ENCODE measurements at regions of chr6 and their contacts with region 1.

Region 1: GRCh38 chr6:43769526-43770416 is at the start of gene VEGFA:
- DNase-seq: peak; percentile 94 to 99 (median 98)
- ATAC-seq: peak; percentile 75
- H3K4me3 ChIP-seq: peak within 1 kb of the TSS; percentile 97
- H3K27ac ChIP-seq: peak within 1 kb of the TSS; percentile 91
- H3K4me1 ChIP-seq: peaks cover 18 to 58% of the 10 kb centered on the region in 2 experiments
- H3K27me3 ChIP-seq: no peaks in the 10 kb centered on the region
- CTCF ChIP-seq: peak; percentile 97 to 99 (median 97)
- EP300 ChIP-seq: no peak
- POLR2A ChIP-seq: peak; percentile 91
- RAD21 ChIP-seq: peak; percentile 97 to 99
- polyA plus RNA-seq, gene VEGFA: 14.0 to 16.0 TPM

Region 2: GRCh38 chr6:43744931-43745710 is 24.6 kb before region 1 on chr6:
- CTCF ChIA-PET with region 1: no interaction called
- POLR2A ChIA-PET with region 1: interaction called, 12 read pairs
- in situ Hi-C with region 1: no loop called
- intact Hi-C with region 1: no loop called
- DNase-seq: no peak
- ATAC-seq: no peak
- H3K4me3 ChIP-seq: no peak overlapping the region
- H3K27ac ChIP-seq: no peak overlapping the region
- H3K4me1 ChIP-seq: peaks cover 7 to 16% of the 10 kb centered on the region in 2 experiments; a peak in 4 of 5 replicates
- H3K27me3 ChIP-seq: no peaks in the 10 kb centered on the region; a peak in 1 of 5 replicates
- CTCF ChIP-seq: no peak
- EP300 ChIP-seq: no peak
- POLR2A ChIP-seq: no peak
- RAD21 ChIP-seq: no peak

Region 3: DNA sequence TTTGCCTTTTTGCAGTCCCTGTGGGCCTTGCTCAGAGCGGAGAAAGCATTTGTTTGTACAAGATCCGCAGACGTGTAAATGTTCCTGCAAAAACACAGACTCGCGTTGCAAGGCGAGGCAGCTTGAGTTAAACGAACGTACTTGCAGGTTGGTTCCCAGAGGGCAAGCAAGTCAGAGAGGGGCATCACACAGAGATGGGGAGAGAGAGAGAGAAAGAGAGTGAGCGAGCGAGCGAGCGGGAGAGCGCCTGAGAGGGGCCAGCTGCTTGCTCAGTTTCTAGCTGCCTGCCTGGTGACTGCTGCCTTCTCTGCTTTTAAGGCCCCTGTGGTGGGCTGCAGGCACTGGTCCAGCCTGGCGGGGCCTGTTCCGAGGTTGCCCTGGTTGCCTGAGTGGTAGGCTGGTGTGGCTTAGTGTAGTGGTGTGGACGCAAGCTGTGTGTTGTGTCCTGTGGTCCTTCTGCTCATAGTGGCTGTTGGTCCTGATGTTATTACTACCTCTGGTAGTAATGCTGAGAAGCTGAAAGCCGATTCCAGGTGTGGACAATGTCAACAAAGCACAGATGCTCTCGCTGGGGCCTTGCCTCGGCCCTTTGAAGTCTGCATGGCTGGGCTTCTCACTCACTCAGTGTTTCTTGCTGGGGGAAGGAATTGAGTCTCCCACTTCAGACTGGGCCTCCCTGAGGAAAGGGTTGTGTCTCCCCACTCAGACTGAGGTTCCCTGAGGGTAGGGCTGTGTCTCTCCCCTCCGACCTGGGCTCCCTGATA is 12.4 kb after region 1 on chr6:
- CTCF ChIA-PET with region 1: no interaction called
- POLR2A ChIA-PET with region 1: interaction called, 59 read pairs
- in situ Hi-C with region 1: no loop called
- intact Hi-C with region 1: no loop called
- DNase-seq: no peak
- ATAC-seq: no peak
- H3K4me3 ChIP-seq: no peak overlapping the region
- H3K27ac ChIP-seq: no peak overlapping the region
- H3K4me1 ChIP-seq: peaks cover 0 to 13% of the 10 kb centered on the region in 2 experiments; a peak in 1 of 5 replicates
- H3K27me3 ChIP-seq: no peaks in the 10 kb centered on the region
- CTCF ChIP-seq: no peak
- EP300 ChIP-seq: no peak
- POLR2A ChIP-seq: no peak
- RAD21 ChIP-seq: no peak

Region 4: DNA sequence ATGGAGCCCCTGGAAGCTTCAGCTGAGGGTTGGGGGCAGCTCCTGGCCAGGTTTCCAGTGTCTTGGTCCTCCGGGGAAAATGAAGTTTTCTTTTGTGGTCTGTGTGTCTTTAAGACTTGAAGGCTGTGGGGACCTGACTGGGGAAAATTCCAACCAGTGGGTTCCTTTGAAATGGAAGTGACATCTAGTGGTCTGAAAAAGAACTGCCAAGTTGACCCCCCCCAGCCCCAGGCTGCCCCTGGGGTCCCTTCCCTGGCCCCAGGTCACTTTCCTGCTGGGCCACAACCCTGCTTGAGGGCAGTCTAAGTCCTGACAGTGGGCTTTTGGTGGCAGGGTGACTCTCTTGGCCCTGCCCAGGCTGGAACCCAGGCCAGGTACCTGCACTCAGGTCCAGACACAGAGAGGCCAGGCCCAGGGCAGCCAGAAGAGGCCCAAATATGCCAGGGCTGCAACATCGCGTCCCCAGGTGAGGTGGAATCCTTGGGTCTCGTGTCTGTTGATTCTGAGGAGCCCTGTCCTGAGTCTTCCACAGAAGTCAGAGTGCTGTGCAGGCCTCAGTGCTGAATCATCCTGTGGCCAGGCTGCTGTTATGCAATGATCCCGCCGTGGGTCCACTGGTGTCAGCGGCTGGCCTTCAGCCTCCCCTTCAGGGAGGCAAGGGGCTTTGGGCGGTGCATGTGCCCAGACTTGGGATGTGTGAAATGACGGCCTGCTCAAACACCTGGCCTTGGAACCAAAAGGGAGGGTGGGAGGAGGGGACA is 68.7 kb after region 1 on chr6:
- CTCF ChIA-PET with region 1: interaction called, 5 read pairs
- POLR2A ChIA-PET with region 1: interaction called, 6 read pairs
- in situ Hi-C with region 1: no loop called
- intact Hi-C with region 1: loop called (anchors 1 kb)
- DNase-seq: peak; percentile 73 to 84 (median 78)
- ATAC-seq: peak; percentile 87
- H3K4me3 ChIP-seq: no peak overlapping the region
- H3K27ac ChIP-seq: peak overlapping the region; percentile 44; the same call in 2 of the 3 replicates
- H3K4me1 ChIP-seq: peaks cover 30 to 38% of the 10 kb centered on the region in 2 experiments
- H3K27me3 ChIP-seq: peaks cover 5 to 12% of the 10 kb centered on the region in 2 experiments; a peak in 4 of 5 replicates
- CTCF ChIP-seq: peak; percentile 73 to 88 (median 81)
- EP300 ChIP-seq: 0 out of 2 replicates have a peak, but pooled peaks have one; percentile 28
- POLR2A ChIP-seq: no peak
- RAD21 ChIP-seq: peak; percentile 66 to 76

Region 5: GRCh38 chr6:44058617-44059358 is 289.0 kb after region 1 on chr6:
- CTCF ChIA-PET with region 1: interaction called, 4 read pairs
- POLR2A ChIA-PET with region 1: interaction called, 3 read pairs
- in situ Hi-C with region 1: loop called (anchors 5 kb)
- intact Hi-C with region 1: no loop called
- DNase-seq: peak; percentile 96 to 99 (median 98)
- ATAC-seq: peak; percentile 93
- H3K4me3 ChIP-seq: peak overlapping the region; percentile 21; the same call in 1 of the 2 replicates
- H3K27ac ChIP-seq: peak overlapping the region; percentile 97
- H3K4me1 ChIP-seq: peaks cover 52 to 63% of the 10 kb centered on the region in 2 experiments
- H3K27me3 ChIP-seq: no peaks in the 10 kb centered on the region
- CTCF ChIP-seq: peak in 1 of 3 experiments; percentile 19; a peak in 2 of 6 replicates
- EP300 ChIP-seq: peak; percentile 92
- POLR2A ChIP-seq: peak; percentile 87
- RAD21 ChIP-seq: peak; percentile 10 to 40; a peak in 1 of 4 replicates

Region 6: DNA sequence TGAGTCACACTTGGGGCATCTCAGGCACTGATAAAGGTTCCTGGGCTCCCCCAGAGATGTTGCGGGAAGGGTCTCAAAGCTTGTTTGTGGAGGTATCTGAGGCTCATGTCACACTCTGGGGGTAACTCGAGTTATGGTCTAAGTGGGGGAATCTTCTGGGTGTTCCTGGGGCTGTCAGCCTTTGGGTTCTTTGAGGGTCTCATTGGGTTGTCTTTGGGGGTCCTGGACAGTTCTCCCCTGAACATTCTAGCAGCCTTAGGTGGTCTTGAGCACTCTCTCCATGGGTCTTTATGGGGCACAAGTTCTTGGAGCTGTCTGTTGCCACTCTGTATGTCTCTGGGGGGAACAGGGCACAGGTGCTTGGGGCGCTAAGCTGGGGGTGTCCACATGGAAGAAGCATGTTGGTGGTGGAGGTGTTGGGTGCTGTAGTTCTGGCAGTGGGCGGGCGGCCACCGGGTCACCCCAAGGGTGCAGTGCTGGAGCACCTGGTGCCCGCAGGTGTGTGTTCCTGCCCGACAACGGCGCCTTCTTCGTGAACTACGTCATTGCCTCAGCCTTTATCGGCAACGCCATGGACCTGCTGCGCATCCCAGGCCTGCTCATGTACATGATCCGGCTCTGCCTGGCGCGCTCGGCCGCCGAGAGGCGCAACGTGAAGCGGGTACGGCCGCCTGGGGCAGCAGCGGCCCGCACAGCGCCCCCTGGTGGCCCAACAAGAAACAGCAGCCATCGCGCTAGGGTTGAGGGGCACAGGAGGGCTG is 381.8 kb after region 1 on chr6:
- CTCF ChIA-PET with region 1: interaction called, 10 read pairs
- POLR2A ChIA-PET with region 1: no interaction called
- in situ Hi-C with region 1: no loop called
- intact Hi-C with region 1: no loop called
- DNase-seq: peak; percentile 88 to 95 (median 90)
- ATAC-seq: peak; percentile 96
- H3K4me3 ChIP-seq: no peak overlapping the region
- H3K27ac ChIP-seq: no peak overlapping the region
- H3K4me1 ChIP-seq: peaks cover 0 to 21% of the 10 kb centered on the region in 2 experiments; a peak in 3 of 5 replicates
- H3K27me3 ChIP-seq: no peaks in the 10 kb centered on the region
- CTCF ChIP-seq: peak; percentile 100
- EP300 ChIP-seq: no peak
- POLR2A ChIP-seq: no peak
- RAD21 ChIP-seq: peak; percentile 88 to 97

Measured in K562 (cell line).